Head of caudate nucleus (tissue), 42 donors: ENCODE measurements at regions of chr19 and their contacts with region 1.

Region 1: GRCh38 chr19:35495107-35496064 is 5.1 kb upstream of the KRTDAP start:
- DNase-seq: peak; percentile 45 to 93 (median 80)

Region 2: GRCh38 chr19:35279985-35280821 is 215.2 kb before region 1 on chr19:
- intact Hi-C with region 1: loop called (anchors 10 kb)
- DNase-seq: peak in 1 of 42 donors; percentile 42

Region 3: GRCh38 chr19:35352448-35353304 is 142.7 kb before region 1 on chr19:
- intact Hi-C with region 1: loop called (anchors 5 kb)
- DNase-seq: peak; percentile 58 to 92 (median 82)